ENCODE measurements at regions of chr17 and their contacts with region 1.

Region 1: GRCh38 chr17:1829592-1830257 is at the starts of genes RPA1 and SMYD4:
- DNase-seq: peak; percentile 80 to 96 (median 86)
- H3K4me3 ChIP-seq: peak within 1 kb of the TSS; percentile 53 to 97 (median 86)
- H3K27ac ChIP-seq: peak within 1 kb of the TSS in 55 of 59 donors; percentile 36 to 89 (median 74)
- H3K27me3 ChIP-seq: no peaks in the 10 kb centered on the region
- CTCF ChIP-seq: peak in 14 of 56 donors; percentile 7 to 57 (median 16)
- total RNA-seq, gene RPA1: 54.2 to 102 (median 73.3) TPM
- total RNA-seq, gene SMYD4: 13.6 to 30.4 (median 20.5) TPM

Region 2: DNA sequence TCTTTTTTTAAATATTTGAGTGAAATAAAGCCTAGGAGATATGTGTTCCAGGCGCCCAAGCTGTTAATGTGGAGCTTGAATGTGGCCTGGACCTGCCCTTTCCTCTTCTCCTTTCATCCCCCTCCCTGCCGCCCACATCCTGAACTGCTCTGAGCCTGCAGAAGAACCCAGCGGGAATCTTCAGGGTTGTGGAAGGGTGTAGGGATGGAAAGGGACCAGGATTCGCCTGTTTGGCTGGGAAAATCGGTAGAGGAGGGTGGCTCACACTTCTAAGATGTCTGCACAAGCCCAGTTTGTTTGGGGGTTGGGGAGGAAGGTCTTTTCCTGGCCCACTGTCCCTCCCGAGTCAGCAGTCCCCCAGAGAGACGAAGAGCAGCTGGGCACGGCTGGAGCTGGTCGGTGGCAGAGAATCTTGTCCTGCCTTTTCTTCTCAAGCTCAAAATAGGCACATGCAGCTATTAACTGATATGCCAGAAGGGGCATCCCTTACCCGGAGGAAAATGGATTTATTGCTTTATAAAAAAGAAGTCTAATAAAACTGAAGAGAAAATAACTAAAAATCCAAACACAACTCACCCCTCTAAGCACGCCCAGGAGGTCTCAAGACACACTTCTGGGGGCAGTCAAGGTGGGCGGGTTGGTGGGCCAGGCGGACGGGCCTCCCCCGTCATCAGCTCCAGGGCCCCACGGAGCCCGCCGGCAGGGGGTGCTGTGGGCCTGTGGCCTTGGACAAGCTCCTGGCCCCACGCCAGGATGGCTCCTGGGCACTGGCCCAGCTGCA is 255.6 kb before region 1 on chr17:
- intact Hi-C with region 1: loop called in 1 of 2 experiments (anchors 10 kb)
- DNase-seq: peak in 9 of 10 donors; percentile 71 to 87 (median 80)
- H3K4me3 ChIP-seq: peak overlapping the region in 3 of 59 donors; percentile 7 to 21 (median 14)
- H3K27ac ChIP-seq: peak overlapping the region in 55 of 59 donors; percentile 3 to 93 (median 73)
- H3K27me3 ChIP-seq: no peaks in the 10 kb centered on the region
- CTCF ChIP-seq: peak; percentile 58 to 97 (median 93)

Region 3: GRCh38 chr17:1882836-1883235 is 53.1 kb after region 1 on chr17:
- intact Hi-C with region 1: loop called in 1 of 2 experiments (anchors 5 kb)
- DNase-seq: peak in 2 of 10 donors; percentile 35 to 42
- H3K4me3 ChIP-seq: no peak overlapping the region
- H3K27ac ChIP-seq: no peak overlapping the region
- H3K27me3 ChIP-seq: no peaks in the 10 kb centered on the region
- CTCF ChIP-seq: peak; percentile 29 to 71 (median 56)

Region 4: DNA sequence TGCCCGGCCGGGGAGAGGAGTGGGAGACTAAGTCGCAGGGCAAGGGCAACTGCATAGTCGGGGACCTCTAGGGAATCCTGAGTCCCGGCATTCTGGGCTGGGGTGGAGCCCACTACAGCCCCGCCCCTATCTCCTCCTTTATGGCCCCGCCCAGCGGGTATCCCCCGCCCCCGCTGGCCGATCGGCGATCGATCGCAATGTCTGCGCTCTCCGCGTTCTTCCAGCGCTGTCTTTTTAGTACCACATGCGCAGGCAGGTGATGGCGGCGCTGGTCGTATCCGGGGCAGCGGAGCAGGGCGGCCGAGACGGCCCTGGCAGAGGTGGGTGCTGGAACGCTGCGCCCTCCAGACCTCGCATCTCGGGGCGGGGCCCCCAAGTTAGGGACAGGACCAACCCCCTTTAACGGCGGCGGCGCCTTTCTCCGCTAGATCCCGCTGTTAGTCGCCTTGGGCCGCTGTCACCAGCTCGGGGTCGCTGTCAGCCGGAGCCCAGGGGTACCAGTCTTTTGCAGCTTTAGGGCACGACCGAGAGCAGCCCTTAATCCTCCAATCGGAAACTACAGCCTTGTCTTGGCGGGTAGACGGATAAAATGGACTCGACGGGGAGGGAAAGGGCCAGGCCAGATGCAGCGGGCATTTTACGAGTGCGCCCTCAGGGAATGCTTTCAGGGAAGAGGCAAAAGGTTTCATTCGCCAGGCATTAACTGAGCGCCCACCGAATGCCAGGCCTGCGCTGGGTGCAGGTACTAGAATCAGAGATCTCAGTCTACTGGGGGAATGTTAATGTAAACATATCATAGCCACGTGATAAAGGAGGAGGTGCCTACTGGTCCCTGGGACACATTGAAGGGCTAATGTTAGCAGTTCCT is 200.4 kb after region 1 on chr17 and contains the start of gene DPH1:
- intact Hi-C with region 1: loop called in 1 of 2 experiments (anchors 10 kb)
- DNase-seq: peak; percentile 72 to 94 (median 90)
- H3K4me3 ChIP-seq: peak within 1 kb of the TSS; percentile 63 to 100 (median 95)
- H3K27ac ChIP-seq: peak within 1 kb of the TSS in 57 of 59 donors; percentile 20 to 93 (median 79)
- H3K27me3 ChIP-seq: peaks cover 0 to 21% (median 0%) of the 10 kb centered on the region in 45 donors
- CTCF ChIP-seq: peak in 23 of 56 donors; percentile 4 to 49 (median 24)
- total RNA-seq, gene DPH1: 57.6 to 158 (median 87.2) TPM

Region 5: GRCh38 chr17:2083613-2084128 is 253.9 kb after region 1 on chr17:
- intact Hi-C with region 1: no loop called
- DNase-seq: no peak
- H3K4me3 ChIP-seq: no peak overlapping the region
- H3K27ac ChIP-seq: peak overlapping the region in 48 of 59 donors; percentile 1 to 89 (median 56)
- H3K27me3 ChIP-seq: no peaks in the 10 kb centered on the region
- CTCF ChIP-seq: no peak